ENCODE measurements at regions of chr3 and their contacts with region 1.

Region 1: DNA sequence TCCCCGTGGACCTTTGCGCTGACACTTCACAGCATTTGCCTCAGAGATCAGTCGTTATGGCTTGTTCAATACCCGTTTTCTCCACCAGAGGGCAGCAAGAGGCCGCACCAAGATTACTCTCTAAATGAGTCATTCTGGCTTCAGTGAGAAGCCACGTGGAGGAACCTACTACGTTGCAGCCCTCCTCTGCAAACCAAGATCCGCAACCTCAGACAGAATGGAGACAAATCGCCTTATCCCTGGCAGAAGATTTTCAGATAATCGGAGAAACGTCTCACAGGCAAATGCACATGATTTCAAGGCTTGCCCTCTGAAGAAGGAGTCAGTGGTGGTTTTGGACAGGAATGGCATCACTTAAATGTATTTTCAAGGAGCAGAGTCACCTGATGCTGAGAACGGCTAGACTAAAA is 60.5 kb downstream of the GTPBP8 start:
- DNase-seq: peak; percentile 96
- H3K4me3 Mint-ChIP-seq: no peak overlapping the region
- H3K27ac Mint-ChIP-seq: no peak overlapping the region
- H3K4me1 Mint-ChIP-seq: peaks cover 2% of the 10 kb centered on the region
- H3K27me3 Mint-ChIP-seq: peaks cover 2% of the 10 kb centered on the region

Region 2: GRCh38 chr3:113111011-113111707 is 59.9 kb after region 1 on chr3:
- intact Hi-C with region 1: loop called (anchors 5 kb)
- DNase-seq: peak; percentile 62
- H3K4me3 Mint-ChIP-seq: no peak overlapping the region
- H3K27ac Mint-ChIP-seq: peak overlapping the region; percentile 46
- H3K4me1 Mint-ChIP-seq: peaks cover 22% of the 10 kb centered on the region
- H3K27me3 Mint-ChIP-seq: no peaks in the 10 kb centered on the region

Region 3: GRCh38 chr3:113211330-113212149 is 160.2 kb after region 1 on chr3 and contains the start of gene BOC:
- intact Hi-C with region 1: loop called (anchors 10 kb)
- DNase-seq: no peak
- H3K4me3 Mint-ChIP-seq: peak within 1 kb of the TSS; percentile 77
- H3K27ac Mint-ChIP-seq: peak within 1 kb of the TSS; percentile 2
- H3K4me1 Mint-ChIP-seq: peaks cover 9% of the 10 kb centered on the region
- H3K27me3 Mint-ChIP-seq: peaks cover 84% of the 10 kb centered on the region
- total RNA-seq, gene BOC: 1.4 and 1.9 TPM in 2 replicates